ENCODE measurements at regions of chr15 and their contacts with region 1.

Region 1: DNA sequence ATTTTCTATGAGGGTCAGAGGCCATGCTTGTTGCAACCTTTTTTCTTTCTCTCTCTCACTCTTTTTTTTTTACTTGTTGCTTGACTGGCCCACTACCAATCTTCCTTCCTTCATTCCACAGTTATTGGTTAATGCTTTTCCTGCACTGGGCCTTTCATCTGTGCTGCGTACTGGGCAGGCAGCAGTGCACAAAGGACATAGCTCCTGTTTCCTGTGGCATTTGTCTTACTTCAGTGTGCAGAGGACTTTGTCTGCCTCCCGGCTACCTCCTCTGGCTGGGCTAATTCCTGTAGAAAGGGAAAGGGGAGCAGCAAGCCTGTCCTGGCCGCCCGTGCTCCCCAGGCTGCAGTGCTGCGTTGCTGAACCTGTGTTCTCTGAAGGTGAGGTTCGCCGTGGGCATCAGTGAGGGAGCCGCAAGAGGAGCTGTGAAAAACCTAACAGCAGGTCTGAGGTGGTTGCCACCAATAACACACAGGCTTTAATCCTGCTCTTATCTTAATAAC is 93.7 kb upstream of the RGMA start:
- DNase-seq: no peak
- H3K4me3 ChIP-seq: no peak overlapping the region
- H3K27ac ChIP-seq: no peak overlapping the region
- H3K4me1 ChIP-seq: peaks cover 4% of the 10 kb centered on the region
- H3K27me3 ChIP-seq: no peaks in the 10 kb centered on the region
- CTCF ChIP-seq: no peak
- EP300 ChIP-seq: no peak
- POLR2A ChIP-seq: no peak

Region 2: DNA sequence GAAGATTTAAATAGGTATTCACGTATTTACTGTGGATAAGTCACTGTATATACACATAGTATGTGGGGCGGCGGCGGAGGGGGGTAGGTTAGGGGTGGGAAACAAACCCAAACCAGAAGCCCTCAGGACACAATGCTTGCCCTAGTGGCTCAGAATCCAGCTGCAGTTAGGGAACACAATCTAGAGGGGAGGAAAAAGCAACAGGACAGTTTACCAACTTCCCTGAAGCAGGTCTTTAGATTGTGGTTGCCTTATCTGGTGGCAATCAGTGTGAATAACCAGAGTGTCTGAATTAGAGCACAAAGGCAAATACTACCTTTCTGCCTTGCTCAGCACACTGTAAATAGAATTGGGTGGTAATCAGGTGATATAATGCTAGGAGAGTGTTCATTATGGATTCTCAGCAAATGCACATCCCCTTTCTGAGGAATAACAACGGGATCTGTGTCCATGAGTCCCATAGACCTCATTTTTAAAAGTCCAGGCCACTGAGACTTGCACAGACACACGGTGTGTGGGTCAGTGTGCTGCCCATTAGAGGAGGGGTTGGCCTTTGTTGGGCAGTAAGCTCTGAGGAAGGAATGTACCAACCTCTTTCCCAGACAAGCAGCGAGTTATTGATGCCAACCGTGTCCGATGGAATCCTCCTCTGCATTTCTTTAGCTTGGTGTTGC is 916.1 kb before region 1 on chr15:
- intact Hi-C with region 1: no loop called
- DNase-seq: no peak
- H3K4me3 ChIP-seq: no peak overlapping the region
- H3K27ac ChIP-seq: no peak overlapping the region
- H3K4me1 ChIP-seq: no peaks in the 10 kb centered on the region
- H3K27me3 ChIP-seq: no peaks in the 10 kb centered on the region
- CTCF ChIP-seq: no peak
- EP300 ChIP-seq: no peak
- POLR2A ChIP-seq: no peak

Region 3: DNA sequence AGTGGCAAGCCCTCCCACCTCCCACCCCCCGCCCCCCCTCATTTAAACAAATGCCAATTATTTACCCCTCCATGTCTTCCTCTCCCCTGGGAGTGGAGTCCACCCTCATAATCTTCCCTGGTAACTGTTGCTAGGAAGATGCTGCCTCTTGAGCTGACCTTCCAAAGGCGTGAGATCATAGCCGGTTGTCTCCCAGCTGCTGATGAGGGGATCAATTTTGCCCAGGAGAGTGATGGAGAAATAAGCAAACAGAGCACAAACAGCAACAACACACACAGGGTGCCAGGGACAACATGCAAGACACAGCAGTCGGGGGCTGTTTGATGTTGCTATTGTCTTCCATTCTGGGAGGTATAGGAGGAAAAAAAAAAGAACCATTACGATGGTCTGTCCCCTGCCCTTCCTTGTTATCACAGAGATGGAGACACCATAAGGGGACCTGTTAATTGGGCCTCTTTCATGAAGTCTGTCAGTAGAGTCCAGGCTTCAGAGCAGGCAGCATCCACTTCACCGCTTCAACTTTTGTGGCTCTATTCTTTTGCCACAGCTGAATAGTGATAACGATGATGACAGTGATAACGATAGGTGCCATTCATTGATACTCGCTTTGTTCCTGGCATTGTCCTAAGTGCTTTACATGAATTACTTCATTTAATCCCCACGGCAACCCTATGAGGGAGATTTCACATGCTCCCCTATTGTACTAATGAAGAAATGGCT is 16.9 kb before region 1 on chr15:
- intact Hi-C with region 1: loop called in 1 of 4 experiments (anchors 2 kb)
- DNase-seq: no peak
- H3K4me3 ChIP-seq: no peak overlapping the region
- H3K27ac ChIP-seq: no peak overlapping the region
- H3K4me1 ChIP-seq: peaks cover 6% of the 10 kb centered on the region
- H3K27me3 ChIP-seq: no peaks in the 10 kb centered on the region
- CTCF ChIP-seq: no peak
- EP300 ChIP-seq: no peak
- POLR2A ChIP-seq: no peak

Measured in ovary (tissue), 10 donors.